Colonic mucosa (tissue), 4 donors: ENCODE measurements at regions of chr4 and their contacts with region 1.

Region 1: GRCh38 chr4:26320538-26321325 is at the start of gene RBPJ:
- DNase-seq: peak; percentile 95
- H3K4me3 ChIP-seq: peak within 1 kb of the TSS; percentile 61
- H3K27ac ChIP-seq: peak within 1 kb of the TSS; percentile 88
- H3K4me1 ChIP-seq: no peaks in the 10 kb centered on the region
- H3K27me3 ChIP-seq: no peaks in the 10 kb centered on the region
- CTCF ChIP-seq: no peak
- total RNA-seq, gene RBPJ: 41.7 to 98.2 TPM

Region 2: DNA sequence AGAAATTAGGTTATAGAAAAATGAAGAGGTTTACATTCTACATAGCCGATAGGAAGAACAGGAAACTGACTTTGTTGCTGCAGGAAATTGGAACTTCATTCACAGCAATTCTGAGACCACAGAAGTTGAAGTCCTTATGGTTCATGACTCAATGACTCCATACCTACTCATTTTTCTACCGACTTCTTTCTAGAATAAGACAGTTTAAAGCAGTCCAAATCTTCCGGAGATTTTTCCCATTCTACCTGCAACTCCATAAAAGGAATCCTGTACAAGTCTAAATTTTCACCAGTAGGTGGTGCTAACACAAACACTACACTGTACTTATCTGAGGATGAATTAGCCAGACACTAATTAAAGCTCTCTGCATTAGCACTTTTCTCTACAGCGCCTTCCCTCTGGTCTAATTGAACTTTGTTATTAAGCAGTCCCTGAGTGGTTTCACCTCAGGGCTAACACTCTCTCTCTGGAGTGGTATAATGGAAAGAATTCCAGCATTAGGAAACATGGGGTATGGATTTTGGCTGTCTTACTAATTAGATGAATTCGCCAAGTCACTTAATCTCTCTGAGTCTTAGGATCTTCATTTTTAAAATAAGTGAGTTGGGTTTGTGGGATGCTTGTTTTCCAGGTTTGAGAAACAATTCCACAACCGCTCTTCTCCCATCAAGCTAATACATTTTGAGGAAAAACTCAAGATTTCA is 238.8 kb before region 1 on chr4:
- intact Hi-C with region 1: loop called (anchors 5 kb)
- DNase-seq: no peak
- H3K4me3 ChIP-seq: no peak overlapping the region
- H3K27ac ChIP-seq: no peak overlapping the region
- H3K4me1 ChIP-seq: no peaks in the 10 kb centered on the region
- H3K27me3 ChIP-seq: no peaks in the 10 kb centered on the region
- CTCF ChIP-seq: peak; percentile 76